Lower leg skin (tissue), 4 donors: ENCODE measurements at regions of chr14 and their contacts with region 1.

Region 1: GRCh38 chr14:36652542-36653201 is 9.0 kb upstream of the PAX9 start:
- DNase-seq: no peak
- H3K4me3 ChIP-seq: no peak overlapping the region
- CTCF ChIP-seq: no peak
- POLR2A ChIP-seq: no peak

Region 2: GRCh38 chr14:36600431-36600830 is 52.2 kb before region 1 on chr14:
- intact Hi-C with region 1: no loop called
- DNase-seq: no peak
- H3K4me3 ChIP-seq: no peak overlapping the region
- CTCF ChIP-seq: no peak
- POLR2A ChIP-seq: no peak

Region 3: GRCh38 chr14:36874396-36875161 is 221.9 kb after region 1 on chr14:
- intact Hi-C with region 1: no loop called
- DNase-seq: no peak
- H3K4me3 ChIP-seq: no peak overlapping the region
- CTCF ChIP-seq: no peak
- POLR2A ChIP-seq: no peak

Region 4: DNA sequence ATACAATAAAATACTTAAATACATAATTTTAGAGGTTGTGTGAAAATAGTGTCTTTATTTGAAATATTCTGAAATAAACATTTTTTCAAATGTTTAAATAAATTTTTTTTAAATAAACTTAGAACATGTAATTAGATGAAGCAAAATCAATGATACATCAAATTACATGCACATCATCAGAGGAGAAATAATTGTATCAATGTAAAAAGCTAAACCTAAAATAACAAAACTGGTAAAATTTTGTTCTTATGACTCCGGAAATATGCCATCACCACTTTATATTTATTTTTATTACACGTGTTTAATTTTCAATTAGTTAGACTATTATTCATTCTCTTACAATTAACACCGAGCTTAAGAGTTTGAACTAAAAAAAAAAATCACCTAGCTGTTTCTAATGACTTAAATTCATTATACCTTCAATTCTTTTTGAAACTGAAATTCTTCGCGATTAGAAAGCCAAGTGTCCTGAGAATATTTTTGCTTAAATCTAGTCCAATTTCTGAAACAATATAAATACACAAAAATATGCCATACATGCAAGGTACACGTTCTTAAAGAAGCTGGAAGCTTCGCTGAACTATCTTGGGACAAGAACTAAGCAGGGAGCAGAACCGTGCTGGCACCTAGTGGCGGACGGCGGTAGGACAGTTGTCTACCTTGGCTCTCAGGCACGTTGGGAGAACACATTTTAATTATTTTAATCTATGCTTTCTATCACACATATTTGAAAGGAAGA is 289.3 kb after region 1 on chr14:
- intact Hi-C with region 1: loop called (anchors 5 kb)
- DNase-seq: peak; percentile 67 to 95
- H3K4me3 ChIP-seq: no peak overlapping the region
- CTCF ChIP-seq: peak in 1 of 3 donors; percentile 57
- POLR2A ChIP-seq: no peak